WTC11 (cell line): ENCODE measurements at regions of chr3 and their contacts with region 1.

Region 1: DNA sequence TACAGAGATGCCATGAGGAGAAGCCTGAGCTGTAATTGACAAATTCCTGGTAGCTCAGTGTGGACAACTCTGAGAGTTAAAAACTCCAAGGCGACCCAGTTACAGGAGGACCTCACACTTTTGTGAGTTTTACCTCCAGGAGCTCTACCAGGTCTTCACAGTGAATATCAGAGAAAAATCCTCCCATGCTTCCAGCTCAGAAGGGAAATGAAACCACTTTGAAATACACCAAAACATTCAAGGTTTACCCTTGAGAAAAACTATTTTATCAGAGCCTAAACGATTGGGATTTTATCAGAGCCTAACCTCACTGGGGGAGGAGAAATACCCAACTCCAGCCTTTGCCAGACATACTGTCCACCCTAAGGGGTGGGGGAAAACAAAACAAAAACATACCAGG is 52.4 kb downstream of the MCCC1 start:
- DNase-seq: no peak
- ATAC-seq: no peak
- H3K4me3 Mint-ChIP-seq: no peak overlapping the region
- H3K27ac Mint-ChIP-seq: peak overlapping the region; percentile 10; the same call in 1 of the 2 replicates
- H3K4me1 Mint-ChIP-seq: no peaks in the 10 kb centered on the region
- H3K27me3 Mint-ChIP-seq: no peaks in the 10 kb centered on the region
- CTCF ChIP-seq: no peak

Region 2: DNA sequence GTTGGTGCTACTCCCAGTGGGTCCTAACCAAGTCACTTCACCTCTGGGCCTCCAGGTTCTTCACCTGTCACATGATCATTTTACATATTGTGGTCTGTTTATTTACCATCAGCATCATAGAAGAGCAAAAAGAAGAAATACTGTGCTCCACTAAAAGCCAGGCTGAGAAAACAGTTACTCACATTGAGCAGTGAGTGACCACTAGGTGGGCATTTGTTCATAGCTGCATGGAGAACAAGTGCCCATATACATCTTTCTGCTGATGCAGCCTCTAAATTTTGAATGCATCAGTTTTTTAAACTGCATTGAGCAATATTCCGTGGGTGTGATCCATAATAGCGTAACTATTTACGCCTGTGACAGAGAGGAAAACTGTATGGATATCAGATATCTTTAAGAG is 142.7 kb before region 1 on chr3:
- CTCF ChIA-PET with region 1: no interaction called
- POLR2A ChIA-PET with region 1: interaction called, 18 read pairs
- DNase-seq: no peak
- ATAC-seq: peak; percentile 52
- H3K4me3 Mint-ChIP-seq: no peak overlapping the region
- H3K27ac Mint-ChIP-seq: no peak overlapping the region
- H3K4me1 Mint-ChIP-seq: 0 out of 2 replicates have a peak, but pooled peaks cover 3% of the 10 kb centered on the region
- H3K27me3 Mint-ChIP-seq: no peaks in the 10 kb centered on the region
- CTCF ChIP-seq: no peak